ENCODE measurements at regions of chr5 and their contacts with region 1.

Region 1: DNA sequence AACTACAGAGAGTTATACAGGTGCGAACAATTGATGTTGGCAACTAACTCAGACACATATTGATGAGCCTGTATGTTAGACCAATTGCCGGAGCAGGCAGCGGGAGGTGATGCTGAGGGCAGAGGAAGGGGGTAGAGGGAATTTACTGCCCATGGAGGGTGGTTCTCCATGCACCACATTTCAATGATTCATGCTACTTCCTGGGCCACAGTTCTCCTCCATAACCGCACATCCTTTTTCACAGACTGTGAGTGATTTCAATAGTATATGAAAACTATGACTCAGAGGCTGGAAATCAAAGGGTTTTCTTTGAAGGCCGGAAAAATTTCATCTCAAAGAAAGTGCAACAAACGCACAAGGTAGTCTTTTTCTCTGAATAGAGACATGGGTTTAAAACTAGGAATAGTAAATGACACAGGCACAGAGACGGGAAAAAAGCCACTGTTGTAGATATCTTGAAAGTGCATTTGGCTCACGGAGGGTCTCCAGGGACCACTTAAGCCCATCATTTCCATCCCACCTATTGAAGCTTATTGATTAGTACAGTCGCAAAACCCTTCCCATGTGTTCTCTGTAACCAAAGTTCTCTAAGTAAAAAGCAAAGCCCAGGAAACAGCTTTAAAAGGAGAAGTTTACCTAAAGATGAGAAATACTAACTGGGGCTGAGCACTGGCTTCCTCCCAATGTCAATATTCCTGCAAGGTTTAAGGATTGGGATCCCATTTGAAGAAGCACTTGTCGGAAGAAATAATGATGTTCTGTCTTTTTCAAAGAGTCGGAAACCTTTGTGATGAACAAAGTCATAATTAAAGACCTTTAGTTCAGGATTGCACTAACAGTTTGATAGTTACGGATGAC is 28.0 kb upstream of the ADAM19 start:
- DNase-seq: peak; percentile 82
- H3K4me3 Mint-ChIP-seq: peak overlapping the region; percentile 3
- H3K27ac Mint-ChIP-seq: peak overlapping the region; percentile 94
- H3K4me1 Mint-ChIP-seq: peaks cover 87% of the 10 kb centered on the region
- H3K27me3 Mint-ChIP-seq: no peaks in the 10 kb centered on the region

Region 2: GRCh38 chr5:157026789-157027424 is 576.7 kb before region 1 on chr5:
- CTCF ChIA-PET with region 1: no interaction called
- intact Hi-C with region 1: loop called (anchors 10 kb)
- DNase-seq: peak; percentile 34
- H3K4me3 Mint-ChIP-seq: no peak overlapping the region
- H3K27ac Mint-ChIP-seq: no peak overlapping the region
- H3K4me1 Mint-ChIP-seq: peaks cover 34% of the 10 kb centered on the region
- H3K27me3 Mint-ChIP-seq: no peaks in the 10 kb centered on the region

Region 3: GRCh38 chr5:157172403-157172802 is 431.2 kb before region 1 on chr5:
- CTCF ChIA-PET with region 1: no interaction called
- intact Hi-C with region 1: loop called (anchors 1 kb)
- DNase-seq: peak; percentile 96
- H3K4me3 Mint-ChIP-seq: peak overlapping the region; percentile 64
- H3K27ac Mint-ChIP-seq: peak overlapping the region; percentile 100
- H3K4me1 Mint-ChIP-seq: peaks cover 86% of the 10 kb centered on the region
- H3K27me3 Mint-ChIP-seq: no peaks in the 10 kb centered on the region

Region 4: DNA sequence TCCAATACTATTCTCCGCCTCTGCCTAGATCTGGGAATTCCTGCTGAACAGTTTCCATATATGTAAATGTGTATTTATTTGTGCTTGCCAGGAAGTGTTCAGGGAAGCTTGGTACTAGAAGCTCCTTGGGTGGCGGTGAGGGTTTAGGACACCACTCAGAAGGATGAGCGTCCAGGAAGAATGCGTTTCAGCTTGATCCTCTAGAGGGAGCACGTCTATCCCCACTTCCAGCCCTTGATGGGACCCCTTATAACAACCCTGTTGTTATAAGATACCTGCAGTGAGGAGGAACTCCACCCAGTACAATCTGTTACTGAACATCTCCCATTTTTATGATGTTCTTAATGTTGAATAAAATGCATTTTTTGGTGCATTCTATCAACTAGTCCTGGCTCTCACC is 248.8 kb before region 1 on chr5:
- CTCF ChIA-PET with region 1: no interaction called
- intact Hi-C with region 1: loop called (anchors 1 kb)
- DNase-seq: no peak
- H3K4me3 Mint-ChIP-seq: no peak overlapping the region
- H3K27ac Mint-ChIP-seq: no peak overlapping the region
- H3K4me1 Mint-ChIP-seq: peaks cover 36% of the 10 kb centered on the region
- H3K27me3 Mint-ChIP-seq: no peaks in the 10 kb centered on the region

Region 5: GRCh38 chr5:157582731-157583620 is 20.6 kb before region 1 on chr5:
- CTCF ChIA-PET with region 1: interaction called, 3 read pairs
- intact Hi-C with region 1: loop called (anchors 1 kb)
- DNase-seq: peak; percentile 51
- H3K4me3 Mint-ChIP-seq: no peak overlapping the region
- H3K27ac Mint-ChIP-seq: peak overlapping the region; percentile 63
- H3K4me1 Mint-ChIP-seq: peaks cover 40% of the 10 kb centered on the region
- H3K27me3 Mint-ChIP-seq: no peaks in the 10 kb centered on the region

Region 6: GRCh38 chr5:158875272-158875679 is 1271.7 kb after region 1 on chr5:
- CTCF ChIA-PET with region 1: no interaction called
- intact Hi-C with region 1: loop called (anchors 10 kb)
- DNase-seq: no peak
- H3K4me3 Mint-ChIP-seq: no peak overlapping the region
- H3K27ac Mint-ChIP-seq: no peak overlapping the region
- H3K4me1 Mint-ChIP-seq: peaks cover 29% of the 10 kb centered on the region
- H3K27me3 Mint-ChIP-seq: no peaks in the 10 kb centered on the region